Posterior vena cava (tissue), 2 donors: ENCODE measurements at regions of chr2 and their contacts with region 1.

Region 1: DNA sequence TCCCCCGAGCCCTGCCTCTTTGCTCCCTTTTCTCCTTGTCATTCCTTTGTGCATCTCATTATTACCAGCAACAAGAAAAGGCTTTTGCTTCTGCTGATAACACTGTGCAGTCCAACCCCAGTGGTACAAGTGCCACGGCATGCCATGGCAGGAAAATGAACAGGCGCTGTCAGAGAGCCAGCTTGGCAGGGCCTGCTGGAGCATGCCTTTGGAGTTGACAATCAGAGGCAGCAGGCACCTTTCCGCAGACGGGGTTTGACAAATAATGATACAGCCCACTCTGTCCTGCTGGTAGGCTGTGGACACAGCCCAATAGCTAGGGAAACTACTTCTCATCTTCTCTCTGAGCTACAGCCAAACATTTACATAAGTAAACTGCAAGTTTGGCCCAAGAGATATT is 243.9 kb upstream of the LRRTM1 start:
- DNase-seq: no peak

Region 2: GRCh38 chr2:80335411-80335810 is 213.1 kb before region 1 on chr2:
- intact Hi-C with region 1: no loop called
- DNase-seq: no peak

Region 3: DNA sequence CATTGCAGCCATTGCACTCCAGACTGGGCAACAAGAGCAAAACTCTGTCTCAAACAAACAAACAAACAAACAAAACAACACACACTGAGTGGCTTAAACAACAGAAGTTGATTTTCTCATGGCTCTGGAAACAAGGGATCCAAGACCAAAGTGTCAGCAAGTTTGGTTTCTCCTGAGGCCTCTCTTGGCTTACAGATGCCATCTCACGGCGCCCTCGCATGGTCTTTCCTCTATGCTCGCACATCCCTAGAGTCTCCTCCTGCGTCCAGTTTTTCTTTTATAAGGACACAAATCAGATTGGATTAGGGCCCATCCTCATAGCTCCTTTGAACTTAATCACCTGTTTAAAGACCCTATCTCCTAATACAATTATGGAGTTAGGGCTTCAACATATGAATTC is 110.5 kb before region 1 on chr2:
- intact Hi-C with region 1: no loop called
- DNase-seq: no peak

Region 4: DNA sequence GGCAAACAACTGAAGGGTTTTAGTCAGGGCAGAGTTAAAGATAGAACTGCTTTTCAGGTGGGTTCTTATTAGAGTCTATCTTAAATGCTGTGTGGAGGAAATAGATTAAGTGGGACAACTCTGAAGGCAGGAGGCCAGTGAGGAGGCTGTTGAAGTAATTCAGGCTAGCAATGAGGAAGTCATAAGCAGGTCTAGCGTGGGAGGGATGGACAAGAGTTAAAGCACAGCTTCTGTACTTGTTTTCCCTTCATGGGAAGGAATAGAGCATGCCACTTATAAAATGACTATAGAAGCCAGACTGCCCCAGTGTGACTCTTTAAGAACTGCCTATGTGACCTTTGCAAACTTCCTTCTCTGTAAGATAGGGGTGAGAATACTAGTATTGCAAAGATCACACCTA is 41.9 kb before region 1 on chr2:
- intact Hi-C with region 1: no loop called
- DNase-seq: no peak

Region 5: GRCh38 chr2:80560326-80560725 is 11.9 kb after region 1 on chr2:
- intact Hi-C with region 1: no loop called
- DNase-seq: no peak

Region 6: DNA sequence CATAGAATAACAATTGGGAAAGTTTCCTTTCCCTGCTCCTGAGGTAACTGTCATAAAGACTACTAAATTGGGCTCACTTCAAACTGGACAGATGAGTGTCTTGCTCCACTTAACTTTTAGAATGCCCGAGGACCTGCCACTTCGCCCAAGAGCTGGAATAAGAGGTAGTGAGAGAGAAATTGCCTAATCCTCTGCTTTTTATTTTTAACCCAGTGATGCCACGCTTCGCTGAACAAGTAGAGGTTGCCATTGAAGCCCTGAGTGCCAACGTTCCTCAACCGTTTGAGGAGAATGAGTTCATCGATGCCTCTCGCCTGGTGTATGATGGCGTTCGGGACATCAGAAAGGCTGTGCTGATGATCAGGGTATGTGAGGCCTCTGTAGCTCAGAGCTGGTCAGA is 25.5 kb after region 1 on chr2:
- intact Hi-C with region 1: loop called in 1 of 2 experiments (anchors 1 kb)
- DNase-seq: no peak